ENCODE measurements at regions of chr2 and their contacts with region 1.

Region 1: GRCh38 chr2:188369365-188369764 is 77.7 kb downstream of the GULP1 start:
- DNase-seq: no peak
- ATAC-seq: peak; percentile 76

Region 2: DNA sequence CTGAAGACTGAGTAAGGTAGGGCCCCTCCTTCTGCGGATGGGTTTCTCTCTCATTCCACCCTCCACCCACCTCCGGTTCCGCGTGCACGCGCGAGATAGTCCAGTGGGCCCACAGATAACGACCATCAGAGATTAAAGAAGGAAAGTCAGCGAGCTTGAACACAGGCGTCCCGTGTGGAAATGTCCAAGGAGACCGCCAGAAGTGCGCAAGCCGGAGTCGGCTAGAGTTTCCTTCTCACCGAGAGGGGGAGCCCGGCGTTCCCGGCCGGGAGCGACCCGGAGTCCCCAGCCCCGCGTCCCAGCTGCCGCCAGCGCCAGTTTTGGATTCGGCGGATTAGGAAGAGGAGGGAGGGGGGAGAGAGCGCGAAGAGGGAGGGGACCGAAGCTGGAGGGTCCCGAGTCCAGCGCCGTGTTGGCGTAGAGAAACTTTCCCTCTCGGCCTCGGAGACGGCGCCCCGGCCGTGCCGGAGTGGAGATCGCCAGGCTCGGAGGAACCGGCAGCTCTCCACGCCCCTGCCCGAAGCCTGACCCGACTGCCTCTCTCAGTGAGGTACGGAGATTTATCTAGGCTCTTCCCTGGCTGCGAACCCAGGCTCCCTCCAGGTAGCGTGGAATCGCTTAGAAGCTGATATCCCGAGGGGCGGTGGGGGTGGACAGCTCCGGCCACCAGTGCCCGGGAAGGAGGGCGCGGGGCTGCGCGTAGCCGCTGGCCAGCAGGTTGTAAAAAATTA is 77.6 kb before region 1 on chr2 and contains the start of gene GULP1:
- intact Hi-C with region 1: loop called (anchors 5 kb)
- DNase-seq: peak; percentile 84
- ATAC-seq: peak; percentile 91
- total RNA-seq, gene GULP1: 4.6 TPM

Region 3: GRCh38 chr2:188628989-188629688 is 259.8 kb after region 1 on chr2:
- intact Hi-C with region 1: no loop called
- DNase-seq: no peak
- ATAC-seq: peak; percentile 39

Measured in Right ventricle myocardium superior (tissue), 1 donor.